MCF 10A (cell line): ENCODE measurements at regions of chr9 and their contacts with region 1.

Region 1: DNA sequence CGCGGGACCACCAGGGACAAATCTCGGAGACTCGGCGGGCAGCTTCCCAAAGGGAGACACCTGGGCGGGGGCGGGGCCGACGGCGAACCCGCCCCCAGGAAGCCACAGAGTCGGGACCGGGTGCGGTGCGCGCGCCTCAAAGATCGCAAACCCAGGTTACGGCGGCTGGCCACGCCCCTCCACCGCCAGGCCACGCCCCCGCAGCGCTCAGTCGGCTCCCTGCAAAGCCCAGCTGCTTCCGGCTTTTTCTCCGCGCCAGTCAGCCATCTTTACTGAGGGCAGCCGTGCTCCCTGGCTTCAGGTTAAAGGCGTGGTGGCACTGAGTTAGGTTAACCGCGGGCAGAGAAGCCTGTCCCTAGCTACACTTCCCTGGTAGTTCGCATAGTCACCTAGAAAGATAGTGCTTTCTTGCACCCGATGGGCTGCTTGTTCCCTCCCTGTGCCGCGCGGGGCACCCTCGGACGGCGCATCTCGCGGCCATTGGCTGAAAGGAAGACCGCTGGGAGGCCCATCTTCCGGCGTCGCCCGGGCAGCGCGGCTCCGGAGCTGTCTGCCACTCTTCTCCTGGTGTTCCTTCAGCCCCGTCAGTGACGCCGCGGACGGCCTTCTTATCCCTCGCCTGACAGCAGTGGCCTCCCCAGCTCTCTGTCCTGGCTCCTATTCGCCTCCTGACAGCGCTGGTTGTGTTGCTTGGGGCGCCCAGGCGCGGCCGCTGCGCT is at the start of gene TBC1D2:
- DNase-seq: peak; percentile 94
- H3K4me3 Mint-ChIP-seq: peak within 1 kb of the TSS; percentile 96
- H3K27ac Mint-ChIP-seq: peak within 1 kb of the TSS; percentile 98
- H3K4me1 Mint-ChIP-seq: peaks cover 42% of the 10 kb centered on the region
- H3K27me3 Mint-ChIP-seq: no peaks in the 10 kb centered on the region
- CTCF ChIP-seq: no peak
- total RNA-seq, gene TBC1D2: 58.4 and 62.7 TPM in 2 replicates

Region 2: GRCh38 chr9:98056269-98057137 is 199.2 kb before region 1 on chr9 and contains the start of gene NANS:
- CTCF ChIA-PET with region 1: interaction called, 4 read pairs
- POLR2A ChIA-PET with region 1: interaction called, 23 read pairs
- intact Hi-C with region 1: loop called (anchors 5 kb)
- DNase-seq: peak; percentile 94
- H3K4me3 Mint-ChIP-seq: peak within 1 kb of the TSS; percentile 98
- H3K27ac Mint-ChIP-seq: peak within 1 kb of the TSS; percentile 97
- H3K4me1 Mint-ChIP-seq: peaks cover 4% of the 10 kb centered on the region
- H3K27me3 Mint-ChIP-seq: no peaks in the 10 kb centered on the region
- CTCF ChIP-seq: no peak
- total RNA-seq, gene NANS: 80.8 and 102 TPM in 2 replicates

Region 3: DNA sequence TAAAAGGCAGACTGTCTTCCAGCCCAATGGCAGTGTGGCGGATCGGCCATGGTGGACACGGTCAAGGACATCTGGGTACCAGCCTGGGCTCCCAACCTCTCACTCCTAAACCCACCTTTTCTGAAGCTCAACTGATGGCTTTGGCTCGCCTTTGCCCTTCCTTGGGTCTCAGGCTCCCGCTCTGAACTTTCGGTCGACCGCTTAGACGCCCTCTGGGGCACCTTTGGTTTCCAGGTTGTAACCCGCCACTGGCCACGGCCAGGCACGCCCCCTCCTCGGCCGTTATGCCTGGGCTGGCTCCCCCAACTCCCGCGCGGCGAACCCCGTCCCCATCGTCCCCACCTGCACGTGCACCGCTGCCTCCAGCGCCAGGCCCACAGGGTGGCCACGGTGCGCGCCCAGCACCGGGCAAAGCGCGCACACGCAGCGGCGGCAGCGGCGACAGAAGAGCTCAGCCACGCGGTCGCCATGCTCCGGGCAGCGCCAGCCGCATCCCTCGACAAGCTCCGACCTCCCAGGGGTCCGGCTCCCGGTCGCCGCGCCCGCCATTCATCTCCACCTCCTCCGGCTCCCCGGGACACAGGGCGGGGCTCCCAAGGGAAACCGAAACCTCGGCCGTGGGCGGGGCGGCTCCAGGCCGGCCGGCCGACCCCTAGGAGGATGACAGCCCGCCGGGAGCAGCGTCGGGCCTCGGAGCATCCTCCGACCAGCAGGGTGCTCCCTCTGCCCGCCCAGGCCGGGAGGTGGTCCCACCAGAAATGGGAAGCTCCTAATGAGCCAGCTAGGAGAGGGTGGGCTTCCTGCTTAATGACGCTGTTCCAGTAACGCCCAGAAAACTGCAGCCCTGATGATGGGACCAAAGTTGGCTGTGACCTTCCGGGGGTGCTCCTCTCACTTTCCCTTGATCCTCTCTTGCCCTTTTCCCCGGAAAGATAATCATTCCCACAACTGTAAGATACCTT is 136.8 kb before region 1 on chr9 and contains the start of gene TRIM14:
- CTCF ChIA-PET with region 1: interaction called, 5 read pairs
- POLR2A ChIA-PET with region 1: interaction called, 34 read pairs
- intact Hi-C with region 1: no loop called
- DNase-seq: peak; percentile 70
- H3K4me3 Mint-ChIP-seq: peak within 1 kb of the TSS; percentile 74
- H3K27ac Mint-ChIP-seq: peak within 1 kb of the TSS; percentile 34
- H3K4me1 Mint-ChIP-seq: peaks cover 22% of the 10 kb centered on the region
- H3K27me3 Mint-ChIP-seq: no peaks in the 10 kb centered on the region
- CTCF ChIP-seq: no peak
- total RNA-seq, gene TRIM14: 15.8 and 17.9 TPM in 2 replicates

Region 4: GRCh38 chr9:98207606-98208005 is 48.1 kb before region 1 on chr9:
- CTCF ChIA-PET with region 1: interaction called, 61 read pairs
- POLR2A ChIA-PET with region 1: interaction called, 7 read pairs
- intact Hi-C with region 1: no loop called
- DNase-seq: no peak
- H3K4me3 Mint-ChIP-seq: no peak overlapping the region
- H3K27ac Mint-ChIP-seq: peak overlapping the region; percentile 39
- H3K4me1 Mint-ChIP-seq: no peaks in the 10 kb centered on the region
- H3K27me3 Mint-ChIP-seq: no peaks in the 10 kb centered on the region
- CTCF ChIP-seq: no peak

Region 5: GRCh38 chr9:98231770-98232478 is 23.8 kb before region 1 on chr9:
- CTCF ChIA-PET with region 1: interaction called, 6 read pairs
- POLR2A ChIA-PET with region 1: interaction called, 16 read pairs
- intact Hi-C with region 1: loop called (anchors 1 kb)
- DNase-seq: peak; percentile 84
- H3K4me3 Mint-ChIP-seq: no peak overlapping the region
- H3K27ac Mint-ChIP-seq: no peak overlapping the region
- H3K4me1 Mint-ChIP-seq: peaks cover 19% of the 10 kb centered on the region
- H3K27me3 Mint-ChIP-seq: no peaks in the 10 kb centered on the region
- CTCF ChIP-seq: no peak

Region 6: GRCh38 chr9:98450486-98450885 is 194.7 kb after region 1 on chr9:
- CTCF ChIA-PET with region 1: no interaction called
- POLR2A ChIA-PET with region 1: no interaction called
- intact Hi-C with region 1: no loop called
- DNase-seq: no peak
- H3K4me3 Mint-ChIP-seq: no peak overlapping the region
- H3K27ac Mint-ChIP-seq: no peak overlapping the region
- H3K4me1 Mint-ChIP-seq: no peaks in the 10 kb centered on the region
- H3K27me3 Mint-ChIP-seq: peaks cover 6% of the 10 kb centered on the region
- CTCF ChIP-seq: no peak